Endothelial cell of umbilical vein (primary cell): ENCODE measurements at regions of chr3 and their contacts with region 1.

Region 1: GRCh38 chr3:15636003-15636709 is 34.6 kb downstream of the BTD start:
- DNase-seq: peak; percentile 96
- H3K4me3 ChIP-seq: no peak overlapping the region
- H3K27ac ChIP-seq: peak overlapping the region; percentile 93
- H3K4me1 ChIP-seq: peaks cover 73% of the 10 kb centered on the region
- H3K27me3 ChIP-seq: no peaks in the 10 kb centered on the region
- CTCF ChIP-seq: peak in 1 of 2 donors; percentile 5
- POLR2A ChIP-seq: peak; percentile 87

Region 2: DNA sequence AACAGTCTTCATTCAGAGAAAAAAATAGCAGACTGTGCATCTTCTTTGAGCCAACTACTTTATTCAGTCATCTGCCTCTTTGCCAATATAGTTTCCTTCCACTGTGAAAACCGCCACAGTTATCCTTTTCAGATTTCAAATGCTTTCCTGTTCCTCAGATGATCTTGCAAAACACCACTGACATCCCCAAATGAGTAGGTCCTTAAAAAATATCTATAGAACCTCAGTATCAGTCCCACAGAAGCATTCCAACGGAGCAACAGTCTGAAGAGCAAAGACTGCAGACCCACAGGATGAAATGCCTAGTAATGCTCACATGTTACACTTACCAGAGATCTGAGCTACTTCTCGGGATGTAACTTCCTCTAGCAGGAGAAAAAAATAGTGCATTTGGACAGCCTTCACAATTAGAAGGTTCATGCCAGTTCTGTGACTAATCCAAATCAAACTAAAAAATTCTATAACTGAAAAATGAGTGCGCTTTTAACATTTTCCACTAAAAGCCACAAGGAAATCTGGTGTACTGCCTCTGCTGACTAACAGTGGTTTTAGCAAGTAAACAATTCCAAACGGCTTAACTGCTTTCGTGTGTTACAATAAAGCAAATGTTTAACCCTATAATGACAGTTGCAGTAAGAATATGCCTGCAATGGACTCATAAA is 161.6 kb after region 1 on chr3 and contains the start of gene ANKRD28:
- CTCF ChIA-PET with region 1: interaction called, 33 read pairs
- POLR2A ChIA-PET with region 1: interaction called, 3 read pairs
- dilution Hi-C with region 1: no loop called
- intact Hi-C with region 1: loop called (anchors 1 kb)
- DNase-seq: peak; percentile 95
- H3K4me3 ChIP-seq: peak within 1 kb of the TSS; percentile 26 to 100 (median 84)
- H3K27ac ChIP-seq: peak within 1 kb of the TSS; percentile 96
- H3K4me1 ChIP-seq: peaks cover 26% of the 10 kb centered on the region
- H3K27me3 ChIP-seq: no peaks in the 10 kb centered on the region
- CTCF ChIP-seq: peak in 1 of 2 donors; percentile 31
- POLR2A ChIP-seq: no peak
- total RNA-seq, gene ANKRD28: 82.2 and 97.3 TPM in 2 replicates

Region 3: DNA sequence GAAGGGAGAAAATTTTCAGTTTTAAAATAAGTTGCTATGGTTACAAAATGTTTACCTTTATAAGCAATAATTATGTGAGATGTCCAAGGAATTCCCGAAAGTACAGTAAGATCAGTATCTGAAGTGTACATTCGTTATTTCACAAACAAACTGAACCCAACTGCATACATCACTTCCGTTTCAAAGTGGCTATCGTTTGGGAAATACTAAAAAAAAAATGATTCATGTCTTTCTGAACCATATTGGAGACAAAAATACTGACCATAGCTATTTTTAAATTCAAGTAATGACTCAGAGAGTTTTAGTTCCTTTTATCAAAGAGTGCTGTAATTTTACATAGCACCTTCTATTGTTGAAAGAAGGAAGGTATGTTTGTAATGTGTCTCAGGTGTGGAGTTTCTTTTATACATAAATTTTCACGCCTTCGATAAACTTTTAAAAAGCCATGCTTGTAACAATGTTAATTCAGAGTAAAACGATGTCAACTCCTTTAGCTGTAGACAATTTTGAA is 169.7 kb after region 1 on chr3:
- CTCF ChIA-PET with region 1: interaction called, 59 read pairs
- POLR2A ChIA-PET with region 1: no interaction called
- dilution Hi-C with region 1: no loop called
- intact Hi-C with region 1: loop called (anchors 1 kb)
- DNase-seq: peak; percentile 90
- H3K4me3 ChIP-seq: no peak overlapping the region
- H3K27ac ChIP-seq: peak overlapping the region; percentile 37
- H3K4me1 ChIP-seq: peaks cover 15% of the 10 kb centered on the region
- H3K27me3 ChIP-seq: no peaks in the 10 kb centered on the region
- CTCF ChIP-seq: no peak
- POLR2A ChIP-seq: no peak

Region 4: DNA sequence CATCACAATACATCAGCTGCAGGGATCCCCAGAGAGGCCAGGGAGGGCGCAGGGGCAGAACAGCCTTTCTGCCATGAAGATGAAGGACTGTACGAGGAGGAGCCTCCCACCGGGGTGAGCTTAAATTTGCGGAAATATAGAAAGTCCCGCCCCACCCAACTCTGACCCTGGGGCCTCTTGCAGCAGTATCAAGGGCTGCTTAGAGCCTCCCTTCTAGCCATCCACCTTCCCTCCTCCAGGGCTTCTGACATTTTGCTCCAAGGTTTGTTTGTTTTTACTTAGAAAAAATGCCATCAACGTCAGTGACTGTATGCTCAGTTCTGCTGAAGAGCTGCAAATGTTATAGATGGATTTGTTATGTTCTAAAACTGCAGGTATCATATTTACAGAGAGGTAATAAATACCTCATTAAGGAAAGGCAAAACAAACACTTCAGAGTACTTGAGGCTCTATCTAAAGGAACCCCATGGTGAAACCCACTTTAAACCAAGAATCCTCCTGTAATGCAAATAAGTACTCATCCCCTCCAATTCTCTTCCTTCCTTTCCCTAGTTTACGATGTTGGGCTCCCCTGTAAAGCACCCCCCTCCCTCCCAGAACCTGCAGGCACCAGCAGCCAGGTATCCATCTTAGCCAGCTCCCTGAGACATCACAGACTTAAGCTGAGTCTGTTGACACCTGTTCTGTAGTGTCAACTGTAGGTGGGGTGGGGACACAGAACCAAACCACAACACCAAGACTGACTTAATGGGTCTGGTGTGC is 846.8 kb after region 1 on chr3:
- CTCF ChIA-PET with region 1: no interaction called
- POLR2A ChIA-PET with region 1: no interaction called
- dilution Hi-C with region 1: no loop called
- intact Hi-C with region 1: loop called (anchors 5 kb)
- DNase-seq: no peak
- H3K4me3 ChIP-seq: no peak overlapping the region
- H3K27ac ChIP-seq: no peak overlapping the region
- H3K4me1 ChIP-seq: peaks cover 64% of the 10 kb centered on the region
- H3K27me3 ChIP-seq: no peaks in the 10 kb centered on the region
- CTCF ChIP-seq: no peak
- POLR2A ChIP-seq: no peak